Gastrocnemius medialis (tissue), 4 donors: ENCODE measurements at regions of chr3 and their contacts with region 1.

Region 1: GRCh38 chr3:49454458-49454857 is 15.6 kb upstream of the DAG1 start:
- DNase-seq: peak in 1 of 2 donors; percentile 42
- ATAC-seq: peak; percentile 44 to 73
- H3K4me3 ChIP-seq: no peak overlapping the region
- H3K27ac ChIP-seq: peak overlapping the region; percentile 7 to 57 (median 28)
- H3K4me1 ChIP-seq: peaks cover 18 to 20% of the 10 kb centered on the region in 2 donors
- H3K27me3 ChIP-seq: no peaks in the 10 kb centered on the region
- CTCF ChIP-seq: peak in 4 of 5 experiments; percentile 14 to 69 (median 32)
- POLR2A ChIP-seq: no peak

Region 2: DNA sequence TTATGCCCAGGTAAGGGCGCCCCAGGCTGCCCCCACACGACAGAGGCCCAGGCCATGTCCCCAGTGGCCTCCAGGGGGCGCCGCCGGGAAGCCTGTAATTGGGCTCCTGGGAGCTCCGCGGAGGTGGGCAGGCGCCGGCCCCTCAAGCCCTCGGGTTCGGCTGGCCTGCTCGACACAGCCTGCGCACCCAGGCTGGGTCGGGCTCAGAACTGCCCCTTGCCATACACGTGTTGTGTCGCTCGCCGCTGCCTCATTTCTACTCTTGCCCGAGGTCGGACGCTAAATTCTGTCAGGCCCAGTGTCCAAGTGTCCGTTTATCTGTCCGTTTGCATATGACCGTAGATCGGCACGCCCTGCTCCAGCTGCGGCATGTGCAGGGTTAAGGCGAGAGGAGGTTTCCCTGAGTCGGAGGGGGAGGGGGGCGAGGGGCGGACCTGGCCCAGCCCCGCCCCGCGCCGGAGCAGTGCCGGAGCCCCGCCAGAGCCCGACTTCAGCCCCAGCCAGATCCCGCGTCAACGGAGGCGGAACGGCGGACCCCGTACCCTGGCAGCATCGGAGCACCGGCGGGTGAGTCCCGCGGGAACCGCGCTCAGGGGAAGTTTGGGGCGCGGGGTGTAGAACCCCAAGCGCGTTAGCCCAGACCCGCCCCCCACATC is 283.2 kb before region 1 on chr3 and contains the start of gene KLHDC8B:
- in situ Hi-C with region 1: loop called (anchors 10 kb)
- intact Hi-C with region 1: loop called (anchors 1 kb)
- DNase-seq: peak; percentile 67 to 82
- ATAC-seq: peak; percentile 80 to 83
- H3K4me3 ChIP-seq: peak within 1 kb of the TSS; percentile 59 to 90 (median 82)
- H3K27ac ChIP-seq: peak within 1 kb of the TSS; percentile 81 to 90 (median 88)
- H3K4me1 ChIP-seq: peaks cover 40 to 41% of the 10 kb centered on the region in 2 donors
- H3K27me3 ChIP-seq: no peaks in the 10 kb centered on the region
- CTCF ChIP-seq: peak; percentile 96 to 99 (median 97)
- POLR2A ChIP-seq: peak; percentile 53 to 54
- total RNA-seq, gene KLHDC8B: 15.8 to 35.8 (median 26.0) TPM

Region 3: GRCh38 chr3:49339945-49340800 is 114.3 kb before region 1 on chr3 and contains the start of gene USP4:
- in situ Hi-C with region 1: loop called (anchors 5 to 10 kb)
- intact Hi-C with region 1: loop called (anchors 1 kb)
- DNase-seq: peak; percentile 77 to 83
- ATAC-seq: peak; percentile 85 to 89
- H3K4me3 ChIP-seq: peak within 1 kb of the TSS; percentile 76 to 86 (median 82)
- H3K27ac ChIP-seq: peak within 1 kb of the TSS; percentile 83 to 92 (median 90)
- H3K4me1 ChIP-seq: peaks cover 5 to 18% of the 10 kb centered on the region in 2 donors
- H3K27me3 ChIP-seq: no peaks in the 10 kb centered on the region
- CTCF ChIP-seq: peak; percentile 13 to 52 (median 35)
- POLR2A ChIP-seq: peak; percentile 61 to 62
- total RNA-seq, gene USP4: 7.2 to 10.2 (median 9.1) TPM

Region 4: DNA sequence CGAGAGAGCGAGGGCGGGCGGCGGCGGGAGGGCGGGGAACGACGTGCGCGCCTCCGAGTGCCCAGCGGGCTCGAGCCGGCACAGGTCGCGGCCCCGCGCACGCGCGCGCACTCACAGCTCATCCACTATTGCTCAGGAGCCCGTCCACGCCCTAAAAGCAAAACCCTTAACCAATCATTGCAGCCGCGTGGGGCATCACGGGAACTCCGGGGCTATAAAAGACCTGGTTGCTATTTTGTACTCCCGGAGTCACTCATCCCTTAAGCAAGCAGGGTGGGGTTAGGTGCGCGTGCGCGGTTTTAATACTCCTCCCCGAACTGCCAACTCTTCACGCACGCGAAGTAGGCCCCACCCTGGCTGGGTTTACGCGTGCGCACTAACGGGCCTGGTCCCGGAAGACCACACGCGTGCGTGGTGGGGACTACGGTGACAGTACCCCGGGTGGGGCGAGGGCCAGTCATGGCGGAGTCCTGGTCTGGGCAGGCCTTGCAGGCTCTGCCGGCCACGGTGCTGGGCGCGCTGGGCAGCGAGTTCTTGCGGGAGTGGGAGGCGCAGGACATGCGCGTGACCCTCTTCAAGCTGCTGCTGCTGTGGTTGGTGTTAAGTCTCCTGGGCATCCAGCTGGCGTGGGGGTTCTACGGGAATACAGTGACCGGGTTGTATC is 42.4 kb before region 1 on chr3 and contains the starts of genes RHOA and TCTA:
- in situ Hi-C with region 1: no loop called
- intact Hi-C with region 1: no loop called
- DNase-seq: peak; percentile 100
- ATAC-seq: peak; percentile 93 to 96
- H3K4me3 ChIP-seq: peak within 1 kb of the TSS; percentile 74 to 97 (median 80)
- H3K27ac ChIP-seq: peak within 1 kb of the TSS; percentile 85 to 96 (median 92)
- H3K4me1 ChIP-seq: peaks cover 48 to 55% of the 10 kb centered on the region in 2 donors
- H3K27me3 ChIP-seq: no peaks in the 10 kb centered on the region
- CTCF ChIP-seq: peak in 1 of 5 experiments; percentile 24
- POLR2A ChIP-seq: peak; percentile 98 to 99
- total RNA-seq, gene RHOA: 244 to 411 (median 282) TPM
- total RNA-seq, gene TCTA: 12.0 to 25.8 (median 15.1) TPM

Region 5: GRCh38 chr3:49539659-49540560 is 85.5 kb after region 1 on chr3:
- in situ Hi-C with region 1: loop called in 1 of 4 experiments (anchors 10 kb)
- intact Hi-C with region 1: loop called (anchors 5 kb)
- DNase-seq: peak; percentile 82 to 89
- ATAC-seq: peak; percentile 83 to 84
- H3K4me3 ChIP-seq: peak overlapping the region; percentile 49 to 83 (median 58)
- H3K27ac ChIP-seq: peak overlapping the region; percentile 79 to 93 (median 87)
- H3K4me1 ChIP-seq: peaks cover 27 to 36% of the 10 kb centered on the region in 2 donors
- H3K27me3 ChIP-seq: no peaks in the 10 kb centered on the region
- CTCF ChIP-seq: peak; percentile 86 to 96 (median 95)
- POLR2A ChIP-seq: peak; percentile 53 to 66